ENCODE measurements at regions of chr1 and their contacts with region 1.

Region 1: DNA sequence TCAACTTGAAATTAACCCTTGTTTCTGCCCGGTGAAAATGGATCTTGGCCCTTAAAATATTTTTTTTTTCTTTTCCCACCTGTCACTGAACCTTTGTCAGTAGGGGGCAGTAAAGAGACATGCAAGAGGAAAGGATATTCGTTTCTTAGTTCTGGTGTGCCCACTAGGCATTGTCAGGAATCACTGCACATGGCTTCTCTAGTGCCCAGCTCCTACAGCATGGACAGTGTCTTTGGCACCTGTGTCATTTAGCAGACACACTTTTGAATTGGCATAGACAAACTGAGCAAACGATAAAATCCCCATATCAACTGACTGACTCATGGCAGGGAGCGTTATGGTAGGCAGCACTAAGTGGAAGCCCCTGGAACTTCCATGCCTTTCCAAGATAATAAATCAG is 1048.1 kb downstream of the BRINP3 start:
- DNase-seq: peak; percentile 52
- ATAC-seq: peak; percentile 44; the same call in 1 of the 2 replicates
- H3K4me3 ChIP-seq: no peak overlapping the region
- H3K27ac ChIP-seq: no peak overlapping the region
- H3K4me1 ChIP-seq: no peaks in the 10 kb centered on the region
- H3K27me3 ChIP-seq: no peaks in the 10 kb centered on the region
- CTCF ChIP-seq: peak; percentile 68
- POLR2A ChIP-seq: no peak
- RAD21 ChIP-seq: peak; percentile 71

Region 2: GRCh38 chr1:190320952-190321351 is 891.3 kb after region 1 on chr1:
- CTCF ChIA-PET with region 1: no interaction called
- POLR2A ChIA-PET with region 1: no interaction called
- dilution Hi-C with region 1: no loop called
- in situ Hi-C with region 1: loop called (anchors 25 kb)
- intact Hi-C with region 1: loop called (anchors 10 kb)
- DNase-seq: peak; percentile 63
- ATAC-seq: peak; percentile 89
- H3K4me3 ChIP-seq: no peak overlapping the region
- H3K27ac ChIP-seq: no peak overlapping the region
- H3K4me1 ChIP-seq: no peaks in the 10 kb centered on the region
- H3K27me3 ChIP-seq: no peaks in the 10 kb centered on the region
- CTCF ChIP-seq: peak; percentile 62
- POLR2A ChIP-seq: no peak
- RAD21 ChIP-seq: peak; percentile 83

Region 3: GRCh38 chr1:190373705-190374336 is 944.2 kb after region 1 on chr1:
- CTCF ChIA-PET with region 1: interaction called, 3 read pairs
- POLR2A ChIA-PET with region 1: no interaction called
- dilution Hi-C with region 1: no loop called
- in situ Hi-C with region 1: no loop called
- intact Hi-C with region 1: loop called (anchors 5 kb)
- DNase-seq: peak; percentile 38
- ATAC-seq: peak; percentile 81
- H3K4me3 ChIP-seq: no peak overlapping the region
- H3K27ac ChIP-seq: no peak overlapping the region
- H3K4me1 ChIP-seq: no peaks in the 10 kb centered on the region
- H3K27me3 ChIP-seq: no peaks in the 10 kb centered on the region
- CTCF ChIP-seq: peak; percentile 78
- POLR2A ChIP-seq: no peak
- RAD21 ChIP-seq: peak; percentile 78

Region 4: DNA sequence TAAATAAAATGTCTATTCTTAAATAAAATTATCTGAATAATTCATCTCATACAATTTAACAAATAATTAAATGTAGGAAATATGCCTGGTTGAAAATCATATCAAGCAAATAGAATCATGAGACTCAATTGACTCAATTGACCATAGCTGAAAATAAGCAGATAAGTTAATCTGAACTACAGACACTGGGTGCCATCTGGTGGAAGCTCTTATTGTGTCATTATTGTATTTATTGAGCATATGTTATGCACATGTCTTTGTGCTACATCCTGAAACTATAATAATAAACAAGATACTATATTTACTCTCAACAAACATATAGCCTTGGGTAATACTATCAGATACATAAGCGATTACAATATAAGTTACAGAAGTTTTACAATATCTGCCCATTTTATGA is 1007.0 kb after region 1 on chr1:
- CTCF ChIA-PET with region 1: no interaction called
- POLR2A ChIA-PET with region 1: no interaction called
- dilution Hi-C with region 1: no loop called
- in situ Hi-C with region 1: no loop called
- intact Hi-C with region 1: loop called (anchors 2 kb)
- DNase-seq: peak; percentile 63
- ATAC-seq: peak; percentile 54; the same call in 1 of the 2 replicates
- H3K4me3 ChIP-seq: no peak overlapping the region
- H3K27ac ChIP-seq: no peak overlapping the region
- H3K4me1 ChIP-seq: no peaks in the 10 kb centered on the region
- H3K27me3 ChIP-seq: no peaks in the 10 kb centered on the region
- CTCF ChIP-seq: peak; percentile 60
- POLR2A ChIP-seq: no peak
- RAD21 ChIP-seq: peak; percentile 71

Measured in IMR-90 (cell line).